Breast epithelium (tissue), 4 donors: ENCODE measurements at regions of chr5 and their contacts with region 1.

Region 1: GRCh38 chr5:115666023-115666422 is 40.2 kb upstream of the TMED7 start:
- DNase-seq: no peak
- H3K4me3 ChIP-seq: no peak overlapping the region
- H3K27ac ChIP-seq: no peak overlapping the region
- H3K4me1 ChIP-seq: no peaks in the 10 kb centered on the region
- H3K27me3 ChIP-seq: no peaks in the 10 kb centered on the region
- CTCF ChIP-seq: no peak
- POLR2A ChIP-seq: no peak

Region 2: DNA sequence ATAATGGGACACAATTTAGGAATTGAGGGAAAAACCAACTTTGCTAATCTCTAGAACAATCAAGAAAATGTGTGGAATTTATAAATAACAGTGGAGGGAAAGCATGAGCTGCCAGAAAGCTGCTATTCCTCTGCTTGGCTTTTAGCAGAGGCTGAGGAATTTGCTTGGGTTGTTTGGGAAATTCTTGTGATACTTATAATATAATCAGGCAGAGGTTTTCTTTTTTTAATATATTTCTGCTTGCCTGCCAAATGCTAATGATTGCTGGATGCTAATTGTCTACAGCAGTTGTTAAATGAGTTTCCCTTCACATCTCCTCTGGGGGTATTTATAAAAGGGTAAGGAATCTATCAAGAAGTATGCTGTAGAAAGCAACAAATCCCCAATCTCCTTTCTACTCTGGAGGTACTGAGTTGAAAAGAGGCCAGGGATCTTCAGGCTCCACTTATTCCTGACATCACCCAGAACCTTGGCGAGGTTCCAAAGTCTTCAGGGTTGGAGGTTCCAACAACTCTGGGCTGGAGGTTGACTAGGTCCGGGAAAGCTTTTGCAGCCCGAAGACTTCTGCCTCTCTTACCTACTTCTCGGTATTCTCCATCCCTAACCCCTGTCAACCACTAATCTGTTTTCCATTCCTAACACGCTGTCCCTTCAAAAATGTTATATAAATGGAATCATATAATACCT is 20.2 kb after region 1 on chr5:
- intact Hi-C with region 1: no loop called
- DNase-seq: no peak
- H3K4me3 ChIP-seq: no peak overlapping the region
- H3K27ac ChIP-seq: peak overlapping the region in 1 of 2 donors; percentile 19
- H3K4me1 ChIP-seq: no peaks in the 10 kb centered on the region
- H3K27me3 ChIP-seq: no peaks in the 10 kb centered on the region
- CTCF ChIP-seq: no peak
- POLR2A ChIP-seq: no peak

Region 3: GRCh38 chr5:116045821-116046220 is 379.8 kb after region 1 on chr5:
- intact Hi-C with region 1: loop called (anchors 2 kb)
- DNase-seq: no peak
- H3K4me3 ChIP-seq: no peak overlapping the region
- H3K27ac ChIP-seq: no peak overlapping the region
- H3K4me1 ChIP-seq: no peaks in the 10 kb centered on the region
- H3K27me3 ChIP-seq: no peaks in the 10 kb centered on the region
- CTCF ChIP-seq: no peak
- POLR2A ChIP-seq: no peak